Activated B cell treated with CpG ODN at 0.5 μM for 24 hours (primary cell): ENCODE measurements at regions of chr1 and their contacts with region 1.

Region 1: DNA sequence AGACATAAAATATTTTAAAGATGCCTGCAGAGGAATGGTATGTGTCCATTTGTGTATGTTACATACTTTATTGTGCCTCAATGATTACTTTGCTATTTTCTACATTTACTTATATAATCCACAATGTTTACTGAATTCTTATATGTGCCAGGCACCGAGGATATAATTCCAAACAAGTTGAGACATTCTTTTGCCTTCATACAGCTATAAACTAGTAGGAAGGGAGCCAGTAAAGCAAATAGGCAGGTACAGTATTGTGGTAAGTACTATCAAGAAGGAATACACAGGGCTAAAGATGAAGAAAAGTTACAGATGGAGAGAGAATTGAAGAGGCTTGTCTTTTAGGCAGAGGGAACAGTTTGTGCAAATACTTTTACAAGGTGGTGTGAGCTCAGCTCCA is 131.6 kb downstream of the DISP1 start:
- DNase-seq: no peak
- ATAC-seq: no peak
- H3K4me3 Mint-ChIP-seq: no peak overlapping the region
- H3K27ac Mint-ChIP-seq: no peak overlapping the region
- H3K4me1 Mint-ChIP-seq: peaks cover 10% of the 10 kb centered on the region
- H3K27me3 Mint-ChIP-seq: no peaks in the 10 kb centered on the region
- CTCF ChIP-seq: no peak

Region 2: DNA sequence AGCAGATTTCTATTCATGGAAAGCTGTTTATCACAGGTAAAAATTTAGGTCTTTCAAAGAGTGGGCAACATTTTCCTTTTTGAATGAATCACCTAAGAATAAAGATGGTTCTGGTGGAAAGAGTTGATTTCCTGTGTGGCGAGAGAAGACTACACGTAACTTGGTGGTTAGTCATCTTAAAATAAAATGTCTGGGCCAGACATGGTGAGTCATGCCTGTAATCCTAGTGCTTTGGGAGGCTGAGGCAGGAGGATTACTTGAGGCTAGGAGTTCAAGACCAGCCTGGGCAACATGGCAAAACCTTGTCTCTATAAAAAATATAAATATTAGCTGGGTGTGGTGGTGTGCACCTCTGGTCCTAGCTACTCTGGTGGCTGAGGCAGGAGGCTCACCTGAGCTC is 65.8 kb before region 1 on chr1:
- CTCF ChIA-PET with region 1: no interaction called
- POLR2A ChIA-PET with region 1: interaction called, 12 read pairs
- intact Hi-C with region 1: no loop called
- DNase-seq: no peak
- ATAC-seq: no peak
- H3K4me3 Mint-ChIP-seq: no peak overlapping the region
- H3K27ac Mint-ChIP-seq: no peak overlapping the region
- H3K4me1 Mint-ChIP-seq: peaks cover 11% of the 10 kb centered on the region
- H3K27me3 Mint-ChIP-seq: no peaks in the 10 kb centered on the region
- CTCF ChIP-seq: no peak

Region 3: GRCh38 chr1:223298701-223299100 is 352.3 kb after region 1 on chr1:
- CTCF ChIA-PET with region 1: no interaction called
- POLR2A ChIA-PET with region 1: no interaction called
- intact Hi-C with region 1: no loop called
- DNase-seq: no peak
- ATAC-seq: no peak
- H3K4me3 Mint-ChIP-seq: no peak overlapping the region
- H3K27ac Mint-ChIP-seq: no peak overlapping the region
- H3K4me1 Mint-ChIP-seq: no peaks in the 10 kb centered on the region
- H3K27me3 Mint-ChIP-seq: no peaks in the 10 kb centered on the region
- CTCF ChIP-seq: no peak

Region 4: DNA sequence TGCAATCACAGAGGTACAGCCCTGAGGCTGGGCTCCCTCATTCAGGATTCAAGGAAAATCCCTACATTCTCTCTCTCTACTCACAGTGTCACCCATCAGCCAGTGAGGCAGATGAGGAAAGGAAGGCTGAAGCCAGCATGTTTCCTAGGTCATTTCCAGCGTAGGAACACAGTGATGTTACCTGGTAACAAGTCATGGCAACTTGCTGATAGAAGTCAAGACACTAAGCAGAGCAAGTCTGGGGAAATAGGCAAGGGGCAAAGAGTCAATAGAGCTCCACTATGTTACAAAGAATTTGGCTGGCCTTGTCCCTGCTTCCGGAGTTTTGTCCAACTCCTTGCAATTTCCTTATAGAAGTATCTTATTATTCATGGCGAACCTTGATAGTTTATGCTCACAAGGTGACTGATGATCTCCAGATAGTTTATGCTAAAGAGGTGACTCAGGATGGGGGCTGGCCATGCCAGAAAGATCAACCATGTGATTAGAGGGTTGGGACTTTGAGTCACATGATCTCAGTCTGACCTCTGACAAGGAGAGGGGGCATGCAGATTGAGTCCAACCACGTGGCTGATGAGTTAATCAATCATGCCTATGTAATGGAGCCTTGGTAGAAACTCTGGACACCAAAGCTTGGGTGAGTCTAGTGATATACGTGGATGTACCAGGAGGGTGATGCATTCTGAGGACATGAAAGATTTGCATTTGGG is 366.4 kb after region 1 on chr1:
- CTCF ChIA-PET with region 1: no interaction called
- POLR2A ChIA-PET with region 1: no interaction called
- intact Hi-C with region 1: no loop called
- DNase-seq: no peak
- ATAC-seq: no peak
- H3K4me3 Mint-ChIP-seq: no peak overlapping the region
- H3K27ac Mint-ChIP-seq: no peak overlapping the region
- H3K4me1 Mint-ChIP-seq: no peaks in the 10 kb centered on the region
- H3K27me3 Mint-ChIP-seq: no peaks in the 10 kb centered on the region
- CTCF ChIP-seq: no peak